ENCODE measurements at regions of chr12 and their contacts with region 1.

Region 1: GRCh38 chr12:53379389-53380103 is 430 bp upstream of the SP1 start:
- DNase-seq: peak; percentile 70
- ATAC-seq: peak; percentile 72
- H3K4me3 Mint-ChIP-seq: no peak overlapping the region
- H3K27ac Mint-ChIP-seq: no peak overlapping the region
- H3K4me1 Mint-ChIP-seq: peaks cover 37% of the 10 kb centered on the region
- H3K27me3 Mint-ChIP-seq: no peaks in the 10 kb centered on the region
- CTCF ChIP-seq: no peak

Region 2: DNA sequence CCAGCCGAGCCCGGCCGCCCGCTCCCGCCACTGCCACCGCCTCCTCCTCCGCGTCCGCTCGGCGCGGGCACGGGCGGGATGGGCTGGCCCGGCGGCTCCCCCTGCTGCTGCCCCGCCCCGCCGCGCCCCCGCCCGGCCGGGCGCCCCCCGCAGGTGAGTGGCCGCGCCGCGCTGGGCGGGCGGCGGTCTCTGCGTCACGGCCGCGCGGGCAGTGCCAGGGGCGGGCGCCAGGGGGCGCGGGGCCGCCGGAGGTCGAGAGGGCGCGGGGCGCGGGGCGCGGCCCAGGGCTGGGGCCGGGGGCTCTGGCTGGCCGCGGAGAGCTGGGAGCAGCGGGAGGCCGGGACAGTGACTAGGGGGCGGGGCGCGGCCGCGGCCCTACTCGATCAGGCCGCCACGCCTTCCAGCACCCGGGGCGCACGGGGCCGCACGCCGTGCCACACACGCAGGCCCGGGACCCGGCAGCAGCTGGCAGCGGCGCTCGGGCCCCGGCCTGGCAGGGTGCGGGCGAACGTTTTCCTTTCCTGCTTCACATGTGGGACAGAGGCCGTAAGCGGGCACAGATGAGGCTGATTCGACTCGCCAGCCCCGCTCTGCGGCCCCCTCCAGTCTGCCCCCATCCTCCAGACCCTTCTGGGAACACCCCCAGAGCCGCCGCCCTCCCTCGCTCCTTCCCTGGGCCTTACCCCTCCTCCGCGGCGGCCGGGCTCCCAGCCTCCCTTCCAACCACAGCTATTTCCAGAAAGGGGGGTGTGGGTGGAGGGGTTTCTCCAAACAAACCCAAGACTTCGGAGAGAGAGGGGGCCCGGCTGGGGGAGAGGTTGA is 332.1 kb before region 1 on chr12:
- CTCF ChIA-PET with region 1: no interaction called
- POLR2A ChIA-PET with region 1: no interaction called
- intact Hi-C with region 1: no loop called
- DNase-seq: peak; percentile 80
- ATAC-seq: peak; percentile 86
- H3K4me3 Mint-ChIP-seq: peak overlapping the region; percentile 64
- H3K27ac Mint-ChIP-seq: peak overlapping the region; percentile 24
- H3K4me1 Mint-ChIP-seq: peaks cover 10% of the 10 kb centered on the region
- H3K27me3 Mint-ChIP-seq: no peaks in the 10 kb centered on the region
- CTCF ChIP-seq: no peak

Region 3: GRCh38 chr12:53295070-53295890 is 84.3 kb before region 1 on chr12 and contains the start of gene PFDN5:
- CTCF ChIA-PET with region 1: interaction called, 3 read pairs
- POLR2A ChIA-PET with region 1: interaction called, 5 read pairs
- intact Hi-C with region 1: loop called (anchors 1 kb)
- DNase-seq: peak; percentile 75
- ATAC-seq: peak; percentile 89
- H3K4me3 Mint-ChIP-seq: peak within 1 kb of the TSS; percentile 99
- H3K27ac Mint-ChIP-seq: peak within 1 kb of the TSS; percentile 97
- H3K4me1 Mint-ChIP-seq: peaks cover 48% of the 10 kb centered on the region
- H3K27me3 Mint-ChIP-seq: no peaks in the 10 kb centered on the region
- CTCF ChIP-seq: no peak
- total RNA-seq, gene PFDN5: 486 and 578 TPM in 2 replicates

Region 4: DNA sequence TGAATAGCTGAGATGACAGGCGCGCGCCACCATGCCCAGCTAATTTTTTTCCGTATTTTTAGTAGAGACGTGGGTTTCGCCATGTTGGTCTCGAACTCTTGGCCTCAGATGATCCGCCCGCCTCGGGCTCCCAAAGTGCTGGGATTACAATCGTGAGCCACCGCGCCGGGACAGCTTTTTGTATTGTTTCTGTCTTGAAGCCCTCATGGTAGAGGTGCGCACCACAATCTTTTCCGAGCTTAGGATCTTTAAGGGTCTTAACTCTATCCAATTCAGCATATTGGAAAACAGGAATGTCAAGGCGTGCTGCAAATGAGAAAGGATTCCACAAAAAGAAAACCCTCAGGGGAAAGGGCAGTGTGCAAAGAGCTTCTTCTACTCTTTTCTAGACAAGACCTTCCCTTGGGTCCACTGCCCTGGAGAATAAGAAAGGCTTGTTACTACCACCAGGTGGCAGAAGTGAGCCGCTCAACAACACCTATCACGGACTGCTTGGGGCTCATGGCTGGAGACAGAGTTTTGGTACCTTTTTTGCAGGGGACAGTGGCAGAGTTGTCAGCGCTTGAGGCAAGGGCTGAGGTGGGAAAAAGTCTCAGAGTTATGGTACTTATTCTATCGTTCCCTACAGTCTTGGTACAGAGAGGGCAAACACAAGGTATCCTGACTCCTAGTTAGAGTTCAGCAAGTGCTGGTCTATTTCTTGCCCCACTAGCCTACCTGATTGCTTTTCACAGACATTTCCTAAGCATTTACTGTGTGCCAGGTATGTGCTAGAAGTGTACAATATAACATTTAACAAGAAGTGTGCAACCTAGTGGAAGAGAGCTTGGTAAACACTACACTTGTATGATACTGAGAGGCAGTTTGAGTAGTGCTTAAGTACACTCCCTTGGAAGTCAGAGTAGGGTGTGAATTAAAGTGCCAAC is 27.0 kb before region 1 on chr12:
- CTCF ChIA-PET with region 1: interaction called, 45 read pairs
- POLR2A ChIA-PET with region 1: interaction called, 20 read pairs
- intact Hi-C with region 1: loop called (anchors 1 kb)
- DNase-seq: peak; percentile 56
- ATAC-seq: peak; percentile 100
- H3K4me3 Mint-ChIP-seq: no peak overlapping the region
- H3K27ac Mint-ChIP-seq: peak overlapping the region; percentile 37
- H3K4me1 Mint-ChIP-seq: peaks cover 4% of the 10 kb centered on the region
- H3K27me3 Mint-ChIP-seq: no peaks in the 10 kb centered on the region
- CTCF ChIP-seq: no peak

Region 5: DNA sequence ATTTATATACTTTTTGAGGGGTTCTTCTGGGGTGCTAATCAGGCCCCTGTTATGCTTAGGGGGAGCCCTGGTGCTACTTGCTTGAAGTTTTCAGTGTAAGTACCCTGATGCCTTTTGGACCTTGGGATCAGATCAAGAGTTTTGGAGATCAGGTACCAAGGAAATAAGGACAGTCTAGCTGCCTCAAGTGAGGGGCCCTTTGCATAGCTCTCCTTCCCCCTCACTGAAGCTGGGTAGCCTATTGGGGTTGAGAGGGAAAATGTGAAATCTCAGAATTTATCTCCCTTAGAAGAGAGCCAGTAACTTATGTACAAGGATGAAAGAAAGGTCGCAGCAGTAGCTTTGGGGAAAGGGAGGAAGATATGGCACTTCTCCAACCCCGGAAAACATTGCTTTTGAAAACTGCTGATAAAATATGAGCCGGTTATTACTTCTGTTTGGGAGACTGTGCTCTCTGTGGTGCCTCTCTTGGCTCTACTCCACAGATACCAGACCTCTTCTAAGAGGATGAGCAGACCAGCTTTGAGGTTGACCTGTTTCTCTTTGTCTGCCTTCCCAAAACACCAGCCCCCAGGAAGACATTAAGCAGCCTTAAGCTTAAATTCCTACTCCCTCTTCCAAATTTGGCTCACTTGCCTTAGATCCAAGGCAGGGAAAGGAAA is 35.3 kb after region 1 on chr12:
- CTCF ChIA-PET with region 1: interaction called, 5 read pairs
- POLR2A ChIA-PET with region 1: interaction called, 38 read pairs
- intact Hi-C with region 1: no loop called
- DNase-seq: no peak
- ATAC-seq: no peak
- H3K4me3 Mint-ChIP-seq: no peak overlapping the region
- H3K27ac Mint-ChIP-seq: peak overlapping the region; percentile 35
- H3K4me1 Mint-ChIP-seq: peaks cover 60% of the 10 kb centered on the region
- H3K27me3 Mint-ChIP-seq: no peaks in the 10 kb centered on the region
- CTCF ChIP-seq: no peak

Region 6: DNA sequence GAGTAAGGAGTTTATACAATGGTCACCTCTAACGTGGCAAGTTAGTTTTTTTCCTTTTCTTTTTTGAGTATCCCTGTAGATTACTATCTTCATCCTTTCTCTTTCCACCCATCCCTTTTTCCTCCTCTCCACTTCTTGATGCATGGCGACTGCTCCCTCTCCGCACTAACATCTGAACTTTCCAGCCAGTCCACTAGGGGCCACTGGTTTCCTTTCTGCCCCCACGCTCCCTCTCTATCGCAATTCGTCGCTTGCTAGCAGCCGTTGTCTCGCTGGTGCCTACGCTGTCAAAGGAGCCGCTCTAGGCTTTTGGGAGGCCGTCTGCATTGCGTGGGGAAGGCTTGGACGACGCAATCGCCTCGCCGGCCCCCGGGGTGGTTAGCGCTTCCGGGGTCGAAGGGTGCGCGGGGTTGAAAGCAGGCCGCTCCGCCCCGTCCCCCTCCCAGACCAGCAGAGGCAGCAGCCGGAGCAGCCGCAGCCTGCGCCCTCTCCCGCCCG is 72.2 kb after region 1 on chr12 and contains the start of gene PCBP2:
- CTCF ChIA-PET with region 1: no interaction called
- POLR2A ChIA-PET with region 1: interaction called, 7 read pairs
- intact Hi-C with region 1: loop called (anchors 1 kb)
- DNase-seq: peak; percentile 92
- ATAC-seq: peak; percentile 92
- H3K4me3 Mint-ChIP-seq: peak within 1 kb of the TSS; percentile 99
- H3K27ac Mint-ChIP-seq: peak within 1 kb of the TSS; percentile 99
- H3K4me1 Mint-ChIP-seq: peaks cover 30% of the 10 kb centered on the region
- H3K27me3 Mint-ChIP-seq: no peaks in the 10 kb centered on the region
- CTCF ChIP-seq: no peak
- total RNA-seq, gene PCBP2: 841 and 853 TPM in 2 replicates

Region 7: GRCh38 chr12:53727310-53728041 is 347.9 kb after region 1 on chr12 and contains the start of gene CALCOCO1:
- CTCF ChIA-PET with region 1: no interaction called
- POLR2A ChIA-PET with region 1: no interaction called
- intact Hi-C with region 1: loop called (anchors 5 kb)
- DNase-seq: peak; percentile 90
- ATAC-seq: peak; percentile 97
- H3K4me3 Mint-ChIP-seq: peak within 1 kb of the TSS; percentile 97
- H3K27ac Mint-ChIP-seq: peak within 1 kb of the TSS; percentile 88
- H3K4me1 Mint-ChIP-seq: peaks cover 24% of the 10 kb centered on the region
- H3K27me3 Mint-ChIP-seq: no peaks in the 10 kb centered on the region
- CTCF ChIP-seq: no peak
- total RNA-seq, gene CALCOCO1: 44.2 and 59.5 TPM in 2 replicates

Measured in activated B cell treated with CpG ODN at 0.5 μM for 24 hours (primary cell).